ENCODE measurements at regions of chr16 and their contacts with region 1.

Region 1: DNA sequence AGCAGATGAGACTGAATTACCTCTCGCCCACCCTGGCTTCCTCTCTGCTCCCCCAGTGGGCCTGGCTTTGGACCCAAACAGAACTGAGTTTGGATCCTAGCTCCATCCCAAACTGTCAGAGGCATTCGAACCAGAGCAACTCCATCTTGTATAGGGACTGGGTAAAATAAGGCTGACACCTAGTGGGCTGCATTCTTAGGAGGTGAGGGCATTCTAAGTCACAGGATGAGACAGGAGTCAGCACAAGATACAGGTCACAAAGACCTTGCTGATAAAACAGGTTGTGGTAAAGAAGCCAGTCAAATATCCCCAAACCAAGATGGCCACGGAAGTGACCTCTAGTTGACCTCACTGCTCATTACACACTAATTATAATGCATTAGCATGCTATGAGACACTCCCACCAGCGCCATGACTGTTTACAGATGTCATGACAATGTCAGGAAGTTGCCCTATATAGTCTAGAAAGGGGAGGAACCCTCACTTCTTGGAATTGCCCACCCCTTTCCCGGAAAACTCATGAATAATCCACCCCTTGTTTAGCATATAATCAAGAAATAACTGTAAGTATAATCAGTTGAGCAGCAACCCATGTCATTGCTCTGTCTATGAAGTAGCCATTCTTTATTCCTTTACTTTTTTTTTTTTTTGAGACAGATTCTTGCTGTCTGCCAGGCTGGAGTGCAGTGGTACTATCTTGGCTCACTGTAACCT is 44.4 kb downstream of the LYRM1 start:
- DNase-seq: peak; percentile 80
- H3K4me3 Mint-ChIP-seq: no peak overlapping the region
- H3K27ac Mint-ChIP-seq: no peak overlapping the region
- H3K4me1 Mint-ChIP-seq: peaks cover 25% of the 10 kb centered on the region
- H3K27me3 Mint-ChIP-seq: no peaks in the 10 kb centered on the region

Region 2: GRCh38 chr16:20774703-20775362 is 170.2 kb before region 1 on chr16:
- CTCF ChIA-PET with region 1: no interaction called
- POLR2A ChIA-PET with region 1: no interaction called
- intact Hi-C with region 1: loop called (anchors 10 kb)
- DNase-seq: peak; percentile 77
- H3K4me3 Mint-ChIP-seq: no peak overlapping the region
- H3K27ac Mint-ChIP-seq: no peak overlapping the region
- H3K4me1 Mint-ChIP-seq: no peaks in the 10 kb centered on the region
- H3K27me3 Mint-ChIP-seq: no peaks in the 10 kb centered on the region

Region 3: DNA sequence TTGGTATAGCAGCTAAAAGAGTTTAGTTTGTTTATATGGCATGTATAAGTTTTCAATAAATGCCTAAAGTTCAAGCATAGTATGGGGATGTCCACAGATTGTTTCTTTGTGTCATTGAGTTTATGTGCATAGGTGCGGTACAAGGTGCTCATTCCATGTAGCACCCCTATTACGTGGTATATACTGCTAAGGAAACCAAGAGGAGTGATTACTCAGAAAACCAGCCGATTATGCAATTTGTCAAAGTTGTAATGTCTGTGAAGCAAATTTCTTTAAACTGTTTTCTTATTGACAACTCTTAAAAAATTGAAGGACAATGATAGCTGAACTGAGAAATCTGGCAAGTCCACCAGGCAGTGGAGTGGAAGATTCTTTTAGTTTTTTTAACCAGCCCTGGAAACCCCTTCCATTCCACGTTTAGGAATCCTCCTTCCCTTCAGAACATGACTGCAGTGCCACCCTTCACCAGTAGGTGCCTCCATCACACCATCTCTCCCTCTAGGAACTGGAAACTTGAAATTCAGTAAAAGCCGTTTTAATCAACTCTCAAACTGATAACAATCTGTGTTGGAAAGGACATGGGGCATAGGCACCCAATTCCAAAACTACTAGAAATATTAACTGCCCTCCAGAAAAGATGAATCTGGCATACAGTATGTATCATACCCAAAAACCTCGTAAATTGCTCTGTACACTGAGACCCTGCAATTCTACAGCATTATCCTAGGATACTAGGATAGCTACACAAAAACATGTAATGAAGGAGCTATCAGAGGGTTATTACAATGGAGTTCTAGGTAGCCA is 95.2 kb before region 1 on chr16:
- CTCF ChIA-PET with region 1: interaction called, 20 read pairs
- POLR2A ChIA-PET with region 1: no interaction called
- intact Hi-C with region 1: loop called (anchors 1 kb)
- DNase-seq: peak; percentile 75
- H3K4me3 Mint-ChIP-seq: no peak overlapping the region
- H3K27ac Mint-ChIP-seq: no peak overlapping the region
- H3K4me1 Mint-ChIP-seq: peaks cover 11% of the 10 kb centered on the region
- H3K27me3 Mint-ChIP-seq: no peaks in the 10 kb centered on the region

Region 4: GRCh38 chr16:20874088-20874581 is 70.9 kb before region 1 on chr16:
- CTCF ChIA-PET with region 1: no interaction called
- POLR2A ChIA-PET with region 1: no interaction called
- intact Hi-C with region 1: loop called (anchors 1 kb)
- DNase-seq: no peak
- H3K4me3 Mint-ChIP-seq: peak overlapping the region; percentile 34
- H3K27ac Mint-ChIP-seq: peak overlapping the region; percentile 81
- H3K4me1 Mint-ChIP-seq: peaks cover 46% of the 10 kb centered on the region
- H3K27me3 Mint-ChIP-seq: no peaks in the 10 kb centered on the region

Region 5: GRCh38 chr16:20900299-20901067 is 44.5 kb before region 1 on chr16 and contains the starts of genes DCUN1D3 and LYRM1:
- CTCF ChIA-PET with region 1: no interaction called
- POLR2A ChIA-PET with region 1: interaction called, 5 read pairs
- intact Hi-C with region 1: loop called (anchors 1 kb)
- DNase-seq: peak; percentile 94
- H3K4me3 Mint-ChIP-seq: peak within 1 kb of the TSS; percentile 81
- H3K27ac Mint-ChIP-seq: peak within 1 kb of the TSS; percentile 93
- H3K4me1 Mint-ChIP-seq: peaks cover 72% of the 10 kb centered on the region
- H3K27me3 Mint-ChIP-seq: no peaks in the 10 kb centered on the region
- total RNA-seq, gene DCUN1D3: 5.9 TPM
- total RNA-seq, gene LYRM1: 26.5 to 28.0 TPM

Region 6: DNA sequence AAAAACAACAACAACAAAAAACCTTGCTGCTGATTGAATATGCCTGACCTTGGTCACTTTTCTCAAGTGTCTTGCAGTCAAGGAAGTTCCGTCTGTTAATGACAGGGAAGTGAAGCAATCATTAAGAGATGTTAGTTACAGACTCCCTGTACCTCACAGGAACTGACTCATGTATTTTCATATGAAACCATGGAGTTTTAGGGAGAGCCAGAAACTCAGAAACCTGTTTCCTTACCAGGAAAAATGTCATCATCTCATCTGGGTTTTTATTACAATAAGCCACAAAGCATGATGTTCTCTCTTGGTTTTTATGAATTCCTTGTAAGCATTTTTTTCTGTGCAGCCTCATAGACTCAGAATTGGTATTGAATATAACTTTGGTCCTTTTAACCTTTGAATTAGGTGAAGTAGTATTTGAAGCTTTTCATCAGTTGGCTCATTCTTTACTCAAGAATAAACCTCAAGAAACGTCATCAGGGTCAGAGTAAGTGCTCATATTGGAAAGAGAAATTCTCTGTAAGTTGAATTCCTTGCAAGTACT is 34.2 kb before region 1 on chr16:
- CTCF ChIA-PET with region 1: interaction called, 3 read pairs
- POLR2A ChIA-PET with region 1: interaction called, 4 read pairs
- intact Hi-C with region 1: loop called (anchors 1 kb)
- DNase-seq: no peak
- H3K4me3 Mint-ChIP-seq: no peak overlapping the region
- H3K27ac Mint-ChIP-seq: peak overlapping the region; percentile 75
- H3K4me1 Mint-ChIP-seq: peaks cover 24% of the 10 kb centered on the region
- H3K27me3 Mint-ChIP-seq: no peaks in the 10 kb centered on the region

Region 7: GRCh38 chr16:21053590-21053989 is 108.6 kb after region 1 on chr16:
- CTCF ChIA-PET with region 1: no interaction called
- POLR2A ChIA-PET with region 1: no interaction called
- intact Hi-C with region 1: no loop called
- DNase-seq: no peak
- H3K4me3 Mint-ChIP-seq: no peak overlapping the region
- H3K27ac Mint-ChIP-seq: no peak overlapping the region
- H3K4me1 Mint-ChIP-seq: no peaks in the 10 kb centered on the region
- H3K27me3 Mint-ChIP-seq: peaks cover 22% of the 10 kb centered on the region

Measured in activated CD4-positive, alpha-beta memory T cell treated with anti-CD3 and anti-CD28 coated beads for 36 hours (primary cell).